Psoas muscle (tissue), 8 donors: ENCODE measurements at regions of chr1 and their contacts with region 1.

Region 1: GRCh38 chr1:64811131-64811530 is 66.3 kb downstream of the RAVER2 start:
- DNase-seq: no peak
- ATAC-seq: no peak
- H3K4me3 ChIP-seq: no peak overlapping the region
- H3K27ac ChIP-seq: no peak overlapping the region
- H3K4me1 ChIP-seq: no peaks in the 10 kb centered on the region
- H3K27me3 ChIP-seq: no peaks in the 10 kb centered on the region
- CTCF ChIP-seq: no peak

Region 2: GRCh38 chr1:64527165-64527564 is 284.0 kb before region 1 on chr1:
- intact Hi-C with region 1: no loop called
- DNase-seq: no peak
- ATAC-seq: no peak
- H3K4me3 ChIP-seq: no peak overlapping the region
- H3K27ac ChIP-seq: no peak overlapping the region
- H3K4me1 ChIP-seq: no peaks in the 10 kb centered on the region
- H3K27me3 ChIP-seq: no peaks in the 10 kb centered on the region
- CTCF ChIP-seq: no peak

Region 3: GRCh38 chr1:64624808-64625207 is 186.3 kb before region 1 on chr1:
- intact Hi-C with region 1: loop called in 1 of 2 experiments (anchors 5 kb)
- DNase-seq: no peak
- ATAC-seq: no peak
- H3K4me3 ChIP-seq: no peak overlapping the region
- H3K27ac ChIP-seq: no peak overlapping the region
- H3K4me1 ChIP-seq: peaks cover 6% of the 10 kb centered on the region
- H3K27me3 ChIP-seq: no peaks in the 10 kb centered on the region
- CTCF ChIP-seq: no peak

Region 4: GRCh38 chr1:64948905-64949833 is 138.0 kb after region 1 on chr1:
- intact Hi-C with region 1: no loop called
- DNase-seq: no peak
- ATAC-seq: peak in 1 of 4 donors; percentile 37
- H3K4me3 ChIP-seq: no peak overlapping the region
- H3K27ac ChIP-seq: no peak overlapping the region
- H3K4me1 ChIP-seq: peaks cover 78% of the 10 kb centered on the region
- H3K27me3 ChIP-seq: no peaks in the 10 kb centered on the region
- CTCF ChIP-seq: no peak